AG04449 (cell line): ENCODE measurements at regions of chr13 and their contacts with region 1.

Region 1: DNA sequence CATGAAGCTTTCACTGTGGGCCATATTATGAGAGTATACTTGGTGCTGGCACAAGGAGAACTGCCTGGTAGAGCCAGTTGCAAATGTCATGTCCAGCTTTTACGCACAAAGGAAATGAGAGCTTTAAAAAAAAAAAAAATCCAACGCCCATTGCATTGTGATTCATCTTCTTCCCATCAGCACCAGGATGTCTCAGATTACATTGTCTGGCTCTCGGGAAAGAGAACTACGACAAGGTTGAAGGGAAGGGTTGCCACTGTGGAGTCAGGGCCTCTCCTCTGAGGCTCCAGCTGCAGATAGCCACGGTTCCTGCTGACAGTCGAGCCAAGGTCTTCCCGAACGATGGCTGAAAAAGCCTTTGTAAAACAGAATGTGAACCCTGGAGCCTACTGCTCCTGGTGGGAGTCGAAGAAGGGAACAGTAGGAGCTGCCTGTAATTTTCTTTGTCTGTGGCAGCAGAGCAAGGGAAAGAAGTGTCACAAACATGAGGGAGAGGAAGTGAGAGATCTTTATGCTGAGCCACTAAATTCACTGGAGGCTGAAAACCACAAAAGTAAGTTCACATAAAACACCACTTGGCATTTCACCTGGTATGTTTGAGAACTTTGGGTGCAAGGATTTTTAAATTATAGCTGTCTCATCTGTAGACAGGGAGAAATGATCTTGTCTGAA is 704.7 kb downstream of the DIAPH3 start:
- DNase-seq: peak; percentile 54
- H3K4me3 ChIP-seq: peak overlapping the region; percentile 6; the same call in 1 of the 2 replicates
- CTCF ChIP-seq: no peak

Region 2: DNA sequence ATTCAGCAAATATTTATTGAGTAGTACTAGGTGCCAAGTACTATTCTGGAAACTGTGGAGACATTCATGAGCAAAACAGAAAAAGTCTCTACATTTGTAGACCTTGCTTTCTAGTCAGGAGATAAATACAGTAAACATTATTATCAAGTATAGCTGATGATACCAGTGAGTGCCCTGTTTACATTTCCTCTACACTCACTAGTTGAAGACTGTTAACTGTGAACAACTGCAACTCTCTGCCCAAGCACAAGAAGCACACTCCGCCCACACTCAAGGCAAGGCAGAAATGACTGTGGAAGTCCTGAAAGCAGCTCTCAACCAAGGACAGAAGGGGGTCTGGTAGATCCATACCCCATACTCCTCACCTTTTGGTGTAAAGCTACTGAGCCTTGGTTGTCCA is 132.3 kb before region 1 on chr13:
- CTCF ChIA-PET with region 1: no interaction called
- POLR2A ChIA-PET with region 1: no interaction called
- DNase-seq: no peak
- H3K4me3 ChIP-seq: no peak overlapping the region
- CTCF ChIP-seq: no peak

Region 3: DNA sequence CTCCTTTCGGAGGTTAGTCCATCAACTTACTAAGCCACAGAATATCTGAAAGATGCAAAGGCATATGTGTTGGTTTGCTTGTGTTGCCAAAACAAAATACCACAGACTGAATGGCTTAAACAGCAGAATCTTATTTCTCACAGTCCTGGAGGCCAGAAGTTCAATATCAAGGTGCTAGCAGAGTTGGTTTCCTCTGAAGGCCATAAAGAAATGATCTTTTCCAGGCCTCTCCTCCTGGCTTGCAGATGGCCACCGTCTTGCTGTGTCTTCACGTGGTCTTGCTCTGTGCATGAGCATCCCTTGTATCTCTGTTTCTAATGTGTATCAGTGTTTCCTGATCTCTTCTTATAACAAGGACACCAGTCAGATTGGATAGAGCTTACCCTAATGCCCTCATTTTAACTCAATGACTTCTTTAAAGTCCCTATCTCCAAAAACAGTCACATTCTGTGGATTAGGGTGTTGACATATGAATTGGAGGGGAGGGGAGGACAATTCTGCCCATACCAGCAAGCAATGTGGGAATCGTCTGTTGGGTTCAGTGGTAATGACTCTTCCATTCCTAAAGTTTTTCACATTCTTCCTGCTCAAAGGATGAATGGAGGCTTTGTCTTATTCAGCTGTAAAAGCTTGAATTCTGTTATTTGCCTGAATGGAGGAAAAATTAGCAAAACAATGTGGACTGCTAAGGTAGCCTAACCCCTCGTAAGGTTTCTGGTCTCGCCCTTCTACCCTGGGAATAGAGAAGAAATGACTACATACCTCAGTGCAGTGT is 11.0 kb before region 1 on chr13:
- CTCF ChIA-PET with region 1: interaction called, 10 read pairs
- POLR2A ChIA-PET with region 1: interaction called, 4 read pairs
- DNase-seq: no peak
- H3K4me3 ChIP-seq: no peak overlapping the region
- CTCF ChIP-seq: no peak

Region 4: DNA sequence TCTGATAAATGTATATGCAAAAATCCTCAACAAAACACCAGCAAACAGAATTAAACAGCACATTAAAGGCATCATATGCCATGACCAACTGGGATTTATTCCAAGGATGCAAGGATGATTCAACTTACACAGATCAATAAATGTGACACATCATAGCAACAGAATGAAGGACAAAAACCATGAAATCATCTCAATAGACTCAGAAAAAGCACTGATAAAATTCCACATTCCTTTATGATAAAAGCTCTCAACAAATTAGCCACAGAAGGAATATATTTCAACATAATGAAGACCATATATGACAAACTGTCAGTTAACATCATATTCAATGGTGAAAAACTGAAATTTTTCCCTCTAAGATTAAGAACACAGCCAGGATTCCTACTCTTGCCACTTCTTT is 13.1 kb after region 1 on chr13:
- CTCF ChIA-PET with region 1: interaction called, 10 read pairs
- POLR2A ChIA-PET with region 1: interaction called, 3 read pairs
- DNase-seq: peak; percentile 41
- H3K4me3 ChIP-seq: no peak overlapping the region
- CTCF ChIP-seq: no peak

Region 5: GRCh38 chr13:59487883-59488282 is 28.8 kb after region 1 on chr13:
- CTCF ChIA-PET with region 1: no interaction called
- POLR2A ChIA-PET with region 1: no interaction called
- DNase-seq: no peak
- H3K4me3 ChIP-seq: no peak overlapping the region
- CTCF ChIP-seq: no peak